IMR-90 (cell line): ENCODE measurements at regions of chr16 and their contacts with region 1.

Region 1: DNA sequence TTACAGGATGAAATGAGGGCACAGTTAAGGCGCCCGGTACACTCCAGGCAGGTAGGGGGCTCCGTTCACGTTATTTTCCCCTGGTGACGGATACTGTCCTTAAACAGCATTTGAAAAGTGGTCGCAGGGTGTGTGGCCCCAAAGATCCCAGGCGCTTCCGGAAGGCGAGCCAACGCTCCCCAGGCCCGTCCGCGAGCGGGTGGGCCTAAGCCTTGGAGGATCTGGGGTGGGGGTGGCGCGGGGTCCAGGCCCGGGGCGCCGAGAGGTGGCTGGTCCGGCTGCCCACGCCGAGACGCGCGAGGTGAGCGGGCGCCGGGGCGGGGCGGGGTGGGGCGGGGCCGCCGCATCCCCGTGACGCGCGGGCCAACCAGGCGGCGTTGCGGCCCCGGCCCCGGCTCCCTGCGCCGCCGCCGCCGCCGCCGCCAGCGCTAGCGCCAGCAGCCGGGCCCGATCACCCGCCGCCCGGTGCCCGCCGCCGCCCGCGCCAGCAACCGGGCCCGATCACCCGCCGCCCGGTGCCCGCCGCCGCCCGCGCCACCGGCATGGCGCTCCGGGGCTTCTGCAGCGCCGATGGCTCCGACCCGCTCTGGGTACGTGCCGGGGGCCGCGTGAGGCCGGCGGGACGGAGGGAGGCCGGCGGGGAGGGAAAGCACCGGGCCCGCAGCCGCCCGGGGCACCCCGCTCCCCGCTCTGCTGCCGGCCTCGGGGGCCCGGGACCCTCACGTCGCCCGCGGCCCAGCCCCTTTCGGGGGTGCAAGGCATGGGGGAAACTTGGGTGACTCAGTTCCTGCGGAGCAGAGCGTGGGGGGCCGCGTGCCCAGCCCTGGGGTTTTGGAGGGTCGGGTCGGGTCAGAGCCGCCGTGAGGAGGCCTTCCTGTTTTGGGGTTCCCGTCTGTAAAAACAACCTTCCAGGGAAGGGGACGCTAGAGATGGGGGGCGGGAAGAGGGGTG is at the start of gene ABCC1:
- DNase-seq: no peak
- ATAC-seq: peak; percentile 77
- H3K4me3 ChIP-seq: peak within 1 kb of the TSS; percentile 82
- H3K27ac ChIP-seq: peak within 1 kb of the TSS; percentile 96
- H3K4me1 ChIP-seq: peaks cover 32% of the 10 kb centered on the region
- H3K27me3 ChIP-seq: no peaks in the 10 kb centered on the region
- CTCF ChIP-seq: no peak
- POLR2A ChIP-seq: no peak
- RAD21 ChIP-seq: no peak
- total RNA-seq, gene ABCC1: 34.4 and 39.4 TPM in 2 replicates

Region 2: GRCh38 chr16:15777533-15778203 is 171.8 kb before region 1 on chr16:
- CTCF ChIA-PET with region 1: no interaction called
- POLR2A ChIA-PET with region 1: no interaction called
- dilution Hi-C with region 1: no loop called
- in situ Hi-C with region 1: no loop called
- intact Hi-C with region 1: loop called (anchors 10 kb)
- DNase-seq: peak; percentile 61
- ATAC-seq: peak; percentile 75
- H3K4me3 ChIP-seq: no peak overlapping the region
- H3K27ac ChIP-seq: no peak overlapping the region
- H3K4me1 ChIP-seq: no peaks in the 10 kb centered on the region; the same call in 1 of the 2 replicates
- H3K27me3 ChIP-seq: peaks cover 9% of the 10 kb centered on the region
- CTCF ChIP-seq: peak; percentile 61
- POLR2A ChIP-seq: no peak
- RAD21 ChIP-seq: peak; percentile 80

Region 3: GRCh38 chr16:15874745-15875314 is 74.7 kb before region 1 on chr16:
- CTCF ChIA-PET with region 1: interaction called, 3 read pairs
- POLR2A ChIA-PET with region 1: interaction called, 3 read pairs
- dilution Hi-C with region 1: no loop called
- in situ Hi-C with region 1: no loop called
- intact Hi-C with region 1: loop called (anchors 5 kb)
- DNase-seq: peak; percentile 80
- ATAC-seq: peak; percentile 82
- H3K4me3 ChIP-seq: no peak overlapping the region
- H3K27ac ChIP-seq: peak overlapping the region; percentile 90
- H3K4me1 ChIP-seq: peaks cover 8% of the 10 kb centered on the region
- H3K27me3 ChIP-seq: no peaks in the 10 kb centered on the region
- CTCF ChIP-seq: peak; percentile 76
- POLR2A ChIP-seq: no peak
- RAD21 ChIP-seq: peak; percentile 78

Region 4: GRCh38 chr16:16021988-16022682 is 72.7 kb after region 1 on chr16:
- CTCF ChIA-PET with region 1: no interaction called
- POLR2A ChIA-PET with region 1: no interaction called
- dilution Hi-C with region 1: no loop called
- in situ Hi-C with region 1: no loop called
- intact Hi-C with region 1: loop called (anchors 5 kb)
- DNase-seq: peak; percentile 97
- ATAC-seq: peak; percentile 80
- H3K4me3 ChIP-seq: no peak overlapping the region
- H3K27ac ChIP-seq: peak overlapping the region; percentile 93
- H3K4me1 ChIP-seq: peaks cover 50% of the 10 kb centered on the region
- H3K27me3 ChIP-seq: no peaks in the 10 kb centered on the region
- CTCF ChIP-seq: no peak
- POLR2A ChIP-seq: peak; percentile 51; the same call in 1 of the 2 replicates
- RAD21 ChIP-seq: peak; percentile 33

Region 5: DNA sequence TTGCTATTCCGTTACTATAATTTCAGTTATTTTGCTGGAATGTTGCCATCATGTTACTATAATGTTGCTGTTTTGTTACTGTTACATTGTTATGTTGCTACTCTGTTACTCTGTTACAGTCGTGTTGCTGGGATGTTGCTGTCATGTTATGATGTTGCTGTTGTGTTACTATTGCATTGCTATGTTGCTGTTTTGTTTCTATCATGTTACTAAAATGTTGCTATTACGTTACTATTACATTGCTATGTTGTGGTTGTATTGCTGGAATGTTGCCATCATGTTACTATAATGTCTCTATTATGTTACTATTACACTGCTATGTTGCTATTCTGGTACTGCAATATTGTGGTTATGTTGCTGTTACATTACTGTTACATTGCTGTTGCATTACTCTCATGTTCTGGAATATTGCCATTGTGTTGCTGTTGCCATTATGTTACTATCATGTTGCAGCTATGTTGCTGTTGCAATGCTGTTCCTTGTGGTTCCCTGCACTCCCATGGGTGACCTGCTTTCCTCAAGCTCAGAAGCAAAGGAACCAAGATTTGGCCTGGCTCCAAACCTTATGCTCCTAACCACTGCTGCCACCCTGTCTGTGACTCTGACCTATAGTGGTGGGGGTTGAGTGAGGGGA is 209.4 kb after region 1 on chr16:
- CTCF ChIA-PET with region 1: no interaction called
- POLR2A ChIA-PET with region 1: no interaction called
- dilution Hi-C with region 1: no loop called
- in situ Hi-C with region 1: no loop called
- intact Hi-C with region 1: no loop called
- DNase-seq: peak; percentile 21
- ATAC-seq: no peak
- H3K4me3 ChIP-seq: no peak overlapping the region
- H3K27ac ChIP-seq: no peak overlapping the region
- H3K4me1 ChIP-seq: no peaks in the 10 kb centered on the region
- H3K27me3 ChIP-seq: no peaks in the 10 kb centered on the region; the same call in 1 of the 2 replicates
- CTCF ChIP-seq: no peak
- POLR2A ChIP-seq: no peak
- RAD21 ChIP-seq: no peak